ENCODE measurements at regions of chr22 and their contacts with region 1.

Region 1: DNA sequence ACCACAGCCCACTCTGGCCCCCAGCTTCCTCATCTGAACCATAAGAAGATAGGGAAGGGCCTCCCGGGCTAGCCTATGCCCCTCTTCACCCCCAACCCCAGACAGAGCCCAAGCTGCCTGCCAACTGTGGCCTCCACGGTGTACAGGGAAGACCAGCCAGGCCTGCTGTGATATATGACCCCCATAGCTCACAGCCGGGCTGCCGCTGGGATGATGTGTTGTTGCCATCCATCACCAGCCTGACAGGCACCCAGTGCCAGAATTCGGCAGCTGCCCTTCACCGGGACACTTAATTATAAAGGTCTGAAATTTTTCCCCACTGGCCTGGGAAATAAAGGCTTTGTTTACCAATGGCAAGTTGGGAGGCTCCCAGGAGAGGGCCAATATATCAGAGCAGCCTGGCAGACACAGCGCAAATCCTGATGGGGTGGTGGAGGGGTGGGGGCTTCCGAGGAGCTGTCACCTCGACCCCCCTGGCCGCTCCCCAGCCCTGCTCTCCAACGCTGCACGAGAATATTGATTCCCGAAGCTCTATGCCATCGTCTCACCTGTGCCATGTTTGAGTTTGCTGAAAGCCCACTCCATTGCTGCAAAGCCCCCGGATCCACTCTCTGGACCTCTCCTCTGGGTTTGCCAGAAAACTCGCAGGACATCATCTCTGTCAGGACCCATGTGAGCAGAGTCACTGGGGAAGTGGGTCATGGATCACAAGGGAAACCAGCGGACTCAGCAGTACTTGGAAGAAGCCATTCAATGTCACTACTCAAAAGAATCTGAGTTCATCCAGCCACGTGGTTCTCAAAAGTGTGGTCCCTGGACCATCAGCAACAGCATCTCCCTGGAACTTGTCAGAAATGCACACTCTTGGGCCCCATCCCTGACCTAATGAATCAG is 296.9 kb downstream of the MN1 start:
- DNase-seq: no peak
- H3K4me3 ChIP-seq: no peak overlapping the region
- H3K27ac ChIP-seq: no peak overlapping the region
- H3K27me3 ChIP-seq: no peaks in the 10 kb centered on the region
- CTCF ChIP-seq: no peak

Region 2: DNA sequence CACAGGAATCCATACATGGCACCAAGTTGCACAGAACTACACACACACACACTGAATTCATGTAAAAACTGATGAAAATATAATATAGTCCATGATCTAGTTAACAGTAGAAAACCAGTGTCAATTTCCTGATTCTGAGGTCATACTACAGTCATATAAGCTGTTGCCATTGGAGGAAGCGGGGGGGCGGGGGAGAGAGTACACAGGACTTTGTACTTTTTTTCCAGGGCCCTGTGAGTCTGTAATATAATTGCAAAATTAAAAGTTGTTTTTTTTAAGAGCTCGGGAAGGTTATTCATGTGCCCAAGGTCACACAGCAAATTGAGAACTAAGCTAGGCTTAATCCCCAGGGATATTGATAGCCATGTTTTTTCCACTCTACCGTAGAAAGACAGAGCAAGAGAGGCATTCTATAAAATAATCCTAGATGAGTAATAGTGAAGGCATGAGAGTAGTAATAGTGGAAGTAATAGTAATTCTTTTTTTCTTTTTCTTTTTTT is 15.4 kb before region 1 on chr22:
- CTCF ChIA-PET with region 1: no interaction called
- POLR2A ChIA-PET with region 1: interaction called, 10 read pairs
- DNase-seq: no peak
- H3K4me3 ChIP-seq: no peak overlapping the region
- H3K27ac ChIP-seq: no peak overlapping the region
- H3K27me3 ChIP-seq: peaks cover 5% of the 10 kb centered on the region
- CTCF ChIP-seq: no peak

Region 3: DNA sequence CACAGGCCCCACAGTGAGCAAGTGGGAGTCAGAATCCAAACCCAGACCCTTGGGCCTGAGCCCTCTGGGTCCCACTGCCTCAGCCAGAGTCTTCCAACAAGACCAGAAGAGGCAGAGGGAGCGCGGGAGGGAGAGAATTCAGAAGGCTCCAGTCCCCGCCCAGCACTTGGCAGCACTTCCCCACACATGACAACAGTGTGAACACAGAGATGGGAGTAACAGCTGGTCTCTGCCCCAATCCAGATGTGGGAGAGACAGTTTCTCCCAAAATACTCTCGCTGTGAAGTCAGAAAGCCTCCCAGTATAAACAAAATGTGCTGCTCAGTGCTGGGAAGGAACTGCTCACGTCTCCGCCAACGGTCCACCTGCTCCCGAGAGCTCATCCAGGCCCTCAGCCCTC is 77.1 kb after region 1 on chr22:
- CTCF ChIA-PET with region 1: no interaction called
- POLR2A ChIA-PET with region 1: no interaction called
- DNase-seq: peak; percentile 48
- H3K4me3 ChIP-seq: no peak overlapping the region
- H3K27ac ChIP-seq: peak overlapping the region; percentile 11
- H3K27me3 ChIP-seq: peaks cover 45% of the 10 kb centered on the region
- CTCF ChIP-seq: no peak

Measured in AG04450 (cell line).